Psoas muscle (tissue), 8 donors: ENCODE measurements at regions of chr4 and their contacts with region 1.

Region 1: DNA sequence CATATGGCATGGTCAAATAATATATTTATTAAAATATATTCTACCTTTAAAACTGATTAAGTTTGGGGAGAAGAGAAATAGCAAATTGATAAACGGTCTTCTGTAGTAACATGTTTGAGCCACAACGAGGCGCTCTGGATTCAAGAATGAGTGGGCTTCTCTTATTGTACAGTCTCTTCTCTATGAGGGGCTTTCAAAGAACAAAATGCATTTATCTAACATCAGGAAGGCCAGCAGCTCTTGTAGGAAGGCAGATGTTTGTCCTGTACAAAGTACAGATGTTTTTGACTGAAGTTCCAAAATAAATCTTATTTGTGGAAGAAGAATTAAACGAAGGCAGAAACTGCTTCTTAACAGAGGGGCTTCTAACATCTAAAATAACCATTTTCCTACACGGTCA is 153.6 kb downstream of the RASL11B start:
- DNase-seq: no peak
- ATAC-seq: peak in 2 of 4 donors; percentile 42
- H3K4me3 ChIP-seq: no peak overlapping the region
- H3K27ac ChIP-seq: no peak overlapping the region
- H3K4me1 ChIP-seq: peaks cover 26% of the 10 kb centered on the region
- H3K27me3 ChIP-seq: no peaks in the 10 kb centered on the region
- CTCF ChIP-seq: peak; percentile 70

Region 2: DNA sequence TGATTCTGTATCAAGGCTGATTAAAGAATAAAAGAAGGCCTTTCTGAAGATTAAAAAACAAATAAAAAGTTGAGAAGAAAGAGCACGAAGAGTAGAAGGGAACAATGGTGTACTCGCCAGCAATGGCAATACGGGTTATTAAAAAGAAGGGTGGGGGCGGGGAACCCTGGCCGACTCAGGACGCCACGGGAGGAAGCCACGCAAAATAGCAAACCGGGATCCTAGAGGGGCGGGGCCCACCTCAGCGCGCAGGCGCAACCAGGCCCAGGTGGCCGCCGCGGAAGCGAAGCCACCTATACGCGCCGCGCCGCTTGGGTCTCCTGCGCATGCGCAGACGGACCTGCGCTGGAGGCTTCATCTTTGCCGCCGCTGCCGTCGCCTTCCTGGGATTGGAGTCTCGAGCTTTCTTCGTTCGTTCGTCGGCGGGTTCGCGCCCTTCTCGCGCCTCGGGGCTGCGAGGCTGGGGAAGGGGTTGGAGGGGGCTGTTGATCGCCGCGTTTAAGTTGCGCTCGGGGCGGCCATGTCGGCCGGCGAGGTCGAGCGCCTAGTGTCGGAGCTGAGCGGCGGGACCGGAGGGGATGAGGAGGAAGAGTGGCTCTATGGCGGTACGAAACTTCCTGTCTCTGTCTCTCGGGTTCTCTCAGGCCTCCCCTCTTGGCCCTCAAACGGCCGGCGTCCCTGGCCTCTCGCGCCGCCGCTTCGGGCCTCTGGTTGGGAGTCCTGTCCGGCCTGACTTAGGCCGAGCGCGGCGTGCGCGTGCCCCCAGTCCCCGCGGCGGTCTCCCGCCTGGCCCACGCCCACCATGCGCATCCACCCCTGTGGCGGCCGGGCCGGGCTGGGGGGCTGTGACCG is 361.9 kb after region 1 on chr4 and contains the start of gene FIP1L1:
- intact Hi-C with region 1: loop called in 1 of 2 experiments (anchors 10 kb)
- DNase-seq: peak; percentile 93 to 97
- ATAC-seq: peak; percentile 99 to 100 (median 100)
- H3K4me3 ChIP-seq: peak within 1 kb of the TSS; percentile 90
- H3K27ac ChIP-seq: peak within 1 kb of the TSS; percentile 83
- H3K4me1 ChIP-seq: peaks cover 9% of the 10 kb centered on the region
- H3K27me3 ChIP-seq: no peaks in the 10 kb centered on the region
- CTCF ChIP-seq: no peak
- total RNA-seq, gene FIP1L1: 27.0 to 30.3 (median 27.6) TPM

Region 3: DNA sequence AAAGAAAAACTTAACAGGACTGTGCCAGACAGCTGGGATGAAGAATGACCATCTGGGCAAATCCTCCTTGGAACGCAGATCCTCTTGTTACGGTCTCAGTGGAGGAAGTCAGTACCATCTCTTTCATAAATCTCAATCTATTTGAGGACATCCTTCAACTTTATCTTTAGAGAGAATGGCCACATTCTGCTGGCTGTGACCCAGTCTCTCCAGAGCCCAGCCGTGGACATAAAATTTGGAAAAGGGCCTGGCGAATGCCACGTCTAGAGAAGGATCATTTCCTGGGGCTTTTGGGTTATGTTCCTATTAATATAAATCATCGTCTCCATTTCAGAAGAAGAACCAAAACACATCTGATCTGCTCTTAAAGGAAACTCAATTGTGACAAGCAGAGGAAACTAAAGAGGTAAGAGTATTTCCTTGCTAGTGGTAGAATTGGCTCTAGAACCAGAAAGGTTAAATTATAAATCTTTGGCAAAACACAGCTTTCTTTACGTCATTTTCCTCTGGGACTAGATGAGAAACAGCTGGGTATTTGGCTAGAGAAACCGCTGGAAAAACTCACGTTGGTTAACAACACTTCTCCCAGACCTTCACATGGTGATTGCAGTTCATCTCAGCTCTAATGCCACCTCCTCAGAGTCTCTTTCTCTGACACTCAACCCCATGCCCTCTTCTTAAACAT is 884.0 kb after region 1 on chr4:
- intact Hi-C with region 1: loop called in 1 of 2 experiments (anchors 5 kb)
- DNase-seq: no peak
- ATAC-seq: peak in 1 of 4 donors; percentile 50
- H3K4me3 ChIP-seq: no peak overlapping the region
- H3K27ac ChIP-seq: no peak overlapping the region
- H3K4me1 ChIP-seq: no peaks in the 10 kb centered on the region
- H3K27me3 ChIP-seq: peaks cover 0 to 5% (median 0%) of the 10 kb centered on the region in 3 donors
- CTCF ChIP-seq: no peak

Region 4: DNA sequence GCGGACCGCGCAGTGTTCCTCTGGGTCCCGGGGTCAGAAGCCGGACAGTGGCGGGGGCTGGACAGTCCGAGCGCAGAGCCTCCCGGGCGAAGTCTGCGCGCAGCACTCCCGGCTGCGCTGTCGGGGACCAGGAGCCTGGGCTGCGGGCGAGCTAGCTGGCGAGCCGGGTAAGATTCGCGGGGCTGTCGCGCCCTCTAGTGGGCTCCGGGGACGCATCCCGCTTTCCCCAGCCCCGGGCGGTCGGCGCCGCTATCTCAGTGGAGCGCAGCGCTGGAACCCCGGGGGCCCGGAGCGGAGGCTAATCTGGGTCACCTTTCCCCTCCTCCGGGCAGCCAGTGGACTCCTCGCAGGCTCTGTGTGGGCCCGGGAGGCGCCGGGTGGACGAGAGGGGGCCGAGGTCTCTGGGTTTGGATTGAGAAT is 1217.6 kb after region 1 on chr4:
- intact Hi-C with region 1: loop called in 1 of 2 experiments (anchors 5 kb)
- DNase-seq: peak; percentile 88 to 92
- ATAC-seq: peak; percentile 91 to 94 (median 94)
- H3K4me3 ChIP-seq: peak overlapping the region; percentile 70
- H3K27ac ChIP-seq: no peak overlapping the region
- H3K4me1 ChIP-seq: peaks cover 28% of the 10 kb centered on the region
- H3K27me3 ChIP-seq: peaks cover 0 to 47% (median 27%) of the 10 kb centered on the region in 3 donors
- CTCF ChIP-seq: peak; percentile 82